Activated CD8-positive, alpha-beta T cell treated with anti-CD3 and anti-CD28 coated beads, Interleukin-2, amount 10 ng/mL, durations not matched to agents 7 days and 5 days (primary cell): ENCODE measurements at regions of chr17 and their contacts with region 1.

Region 1: DNA sequence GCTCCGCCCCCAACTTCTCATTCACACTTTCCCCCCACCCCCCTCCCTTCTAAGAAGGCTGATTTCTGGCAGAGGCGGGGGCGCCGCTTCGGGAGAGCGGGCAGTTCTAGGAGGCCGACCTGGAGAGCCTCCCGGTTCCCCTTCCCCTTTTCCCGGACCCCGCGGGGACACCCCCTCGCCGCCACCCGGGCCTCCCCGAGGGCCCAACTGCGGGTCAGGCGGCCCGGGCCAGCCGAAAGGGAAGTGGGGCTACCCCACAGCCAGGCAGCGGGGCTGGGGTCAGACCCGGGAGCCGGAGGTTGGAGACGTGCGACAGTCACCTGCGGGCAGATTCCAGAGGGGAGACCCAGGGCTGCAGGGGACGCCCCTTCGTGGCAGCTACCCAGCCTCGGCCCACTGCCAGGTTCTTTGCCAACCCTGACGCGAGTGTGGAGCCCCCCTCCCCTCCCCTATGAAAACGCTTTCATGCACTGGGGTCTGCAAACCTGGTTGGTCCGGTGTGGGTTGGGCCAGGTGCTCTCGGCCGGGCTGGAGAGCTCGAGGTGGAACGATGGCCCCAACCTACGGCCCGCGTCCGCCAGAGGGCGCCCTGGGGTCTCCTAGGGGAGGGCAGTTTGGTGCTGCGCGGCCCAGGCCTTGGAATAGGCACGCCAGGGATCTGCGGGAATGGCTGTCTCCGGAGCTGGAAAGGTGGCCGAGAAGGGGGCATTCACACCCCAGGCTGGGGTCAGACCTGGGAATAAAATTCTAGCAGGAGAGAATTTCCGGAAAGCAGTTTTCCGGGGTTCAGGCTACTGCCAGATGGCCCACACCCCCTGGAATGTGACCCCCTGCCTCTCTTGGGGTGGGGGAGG is 721 bp upstream of the SOCS3 start:
- DNase-seq: peak; percentile 93
- ATAC-seq: peak; percentile 33
- H3K4me3 Mint-ChIP-seq: peak overlapping the region; percentile 74
- H3K27ac Mint-ChIP-seq: peak overlapping the region; percentile 89
- H3K4me1 Mint-ChIP-seq: peaks cover 51% of the 10 kb centered on the region
- H3K27me3 Mint-ChIP-seq: peaks cover 19% of the 10 kb centered on the region

Region 2: GRCh38 chr17:78289802-78290363 is 70.7 kb before region 1 on chr17:
- CTCF ChIA-PET with region 1: interaction called, 10 read pairs
- POLR2A ChIA-PET with region 1: interaction called, 3 read pairs
- DNase-seq: peak; percentile 82
- ATAC-seq: peak; percentile 99
- H3K4me3 Mint-ChIP-seq: no peak overlapping the region
- H3K27ac Mint-ChIP-seq: no peak overlapping the region
- H3K4me1 Mint-ChIP-seq: no peaks in the 10 kb centered on the region
- H3K27me3 Mint-ChIP-seq: no peaks in the 10 kb centered on the region

Region 3: DNA sequence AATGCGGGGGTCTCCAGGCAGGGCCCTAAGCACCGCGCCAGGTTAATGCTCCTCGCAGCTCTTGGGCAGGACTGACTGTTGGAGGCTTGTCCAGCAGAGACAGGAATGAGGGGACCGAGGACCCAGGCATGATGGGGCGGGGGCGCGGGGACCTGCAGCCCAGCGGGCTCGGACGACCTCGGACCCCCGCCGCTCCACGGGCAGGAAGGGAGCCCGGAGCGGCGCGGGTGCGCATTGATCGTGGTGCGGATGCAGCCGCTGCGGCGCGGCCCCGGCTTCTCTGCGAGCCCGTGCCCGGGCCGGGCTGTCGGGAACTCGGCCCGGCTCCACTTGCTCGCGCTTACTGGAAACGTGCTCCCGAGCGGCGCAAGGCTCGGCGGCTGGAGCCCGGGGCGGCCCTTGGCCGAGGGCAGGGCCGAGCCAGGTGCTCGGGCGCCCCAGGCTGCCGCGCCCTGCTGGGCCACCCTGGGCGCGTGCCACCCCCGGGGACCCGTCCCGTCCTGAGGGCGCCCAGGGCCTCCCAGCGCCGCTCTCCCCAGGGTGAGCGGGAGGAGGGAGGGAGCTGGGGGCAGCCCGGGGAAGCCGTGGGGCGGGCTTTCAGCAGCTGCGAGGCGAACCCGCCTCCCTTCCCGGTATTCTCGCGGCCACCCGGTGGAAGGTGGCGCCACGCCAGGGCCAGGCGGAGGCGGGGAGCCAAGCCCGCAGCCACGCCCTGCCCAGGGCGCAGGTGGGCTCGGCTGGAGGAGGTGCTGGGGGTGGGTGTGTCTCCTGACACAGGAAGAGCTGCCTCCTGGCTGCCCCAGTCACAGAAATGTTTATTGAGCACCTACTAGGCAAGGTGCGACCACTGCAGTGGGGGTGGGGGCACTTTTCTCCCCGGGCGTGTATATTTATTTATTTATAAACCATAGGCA is 46.6 kb before region 1 on chr17:
- CTCF ChIA-PET with region 1: interaction called, 11 read pairs
- POLR2A ChIA-PET with region 1: no interaction called
- DNase-seq: peak; percentile 80
- ATAC-seq: peak; percentile 86
- H3K4me3 Mint-ChIP-seq: peak overlapping the region; percentile 65
- H3K27ac Mint-ChIP-seq: no peak overlapping the region
- H3K4me1 Mint-ChIP-seq: peaks cover 30% of the 10 kb centered on the region
- H3K27me3 Mint-ChIP-seq: peaks cover 25% of the 10 kb centered on the region

Region 4: DNA sequence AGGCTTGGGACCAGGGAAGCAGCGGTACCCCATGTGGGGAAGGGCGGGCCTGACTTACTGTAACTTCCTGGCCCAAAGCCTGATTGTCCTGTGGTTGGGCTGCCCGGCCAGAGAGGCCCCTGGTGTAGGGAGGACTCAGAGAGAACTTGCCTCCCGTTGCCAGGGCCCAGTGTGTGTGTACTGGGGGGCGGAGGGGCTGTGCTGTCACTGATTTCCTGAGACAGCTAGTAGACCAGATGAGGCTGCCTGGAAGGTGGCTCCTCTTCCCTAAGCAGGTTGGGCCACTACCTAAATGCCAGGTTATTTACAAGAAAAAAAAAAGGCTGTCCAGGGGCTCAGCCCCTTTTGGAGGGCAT is 17.4 kb before region 1 on chr17:
- CTCF ChIA-PET with region 1: interaction called, 11 read pairs
- POLR2A ChIA-PET with region 1: interaction called, 11 read pairs
- DNase-seq: no peak
- ATAC-seq: peak; percentile 51
- H3K4me3 Mint-ChIP-seq: peak overlapping the region; percentile 54
- H3K27ac Mint-ChIP-seq: peak overlapping the region; percentile 81
- H3K4me1 Mint-ChIP-seq: peaks cover 41% of the 10 kb centered on the region
- H3K27me3 Mint-ChIP-seq: peaks cover 21% of the 10 kb centered on the region

Region 5: GRCh38 chr17:78378225-78379130 is 17.9 kb after region 1 on chr17 and contains the start of gene PGS1:
- CTCF ChIA-PET with region 1: interaction called, 33 read pairs
- POLR2A ChIA-PET with region 1: interaction called, 10 read pairs
- DNase-seq: peak; percentile 88
- ATAC-seq: peak; percentile 71
- H3K4me3 Mint-ChIP-seq: peak within 1 kb of the TSS; percentile 88
- H3K27ac Mint-ChIP-seq: peak within 1 kb of the TSS; percentile 90
- H3K4me1 Mint-ChIP-seq: peaks cover 43% of the 10 kb centered on the region
- H3K27me3 Mint-ChIP-seq: peaks cover 6% of the 10 kb centered on the region
- total RNA-seq, gene PGS1: 46.5 to 51.0 TPM

Region 6: GRCh38 chr17:78383725-78384471 is 23.3 kb after region 1 on chr17:
- CTCF ChIA-PET with region 1: interaction called, 33 read pairs
- POLR2A ChIA-PET with region 1: interaction called, 10 read pairs
- DNase-seq: peak; percentile 52
- ATAC-seq: peak; percentile 13
- H3K4me3 Mint-ChIP-seq: peak overlapping the region; percentile 63
- H3K27ac Mint-ChIP-seq: peak overlapping the region; percentile 88
- H3K4me1 Mint-ChIP-seq: peaks cover 88% of the 10 kb centered on the region
- H3K27me3 Mint-ChIP-seq: no peaks in the 10 kb centered on the region

Region 7: GRCh38 chr17:78421484-78422266 is 61.1 kb after region 1 on chr17:
- CTCF ChIA-PET with region 1: interaction called, 86 read pairs
- POLR2A ChIA-PET with region 1: interaction called, 3 read pairs
- DNase-seq: peak; percentile 79
- ATAC-seq: peak; percentile 82
- H3K4me3 Mint-ChIP-seq: no peak overlapping the region
- H3K27ac Mint-ChIP-seq: peak overlapping the region; percentile 39
- H3K4me1 Mint-ChIP-seq: peaks cover 23% of the 10 kb centered on the region
- H3K27me3 Mint-ChIP-seq: no peaks in the 10 kb centered on the region